ENCODE measurements at regions of chr6 and their contacts with region 1.

Region 1: DNA sequence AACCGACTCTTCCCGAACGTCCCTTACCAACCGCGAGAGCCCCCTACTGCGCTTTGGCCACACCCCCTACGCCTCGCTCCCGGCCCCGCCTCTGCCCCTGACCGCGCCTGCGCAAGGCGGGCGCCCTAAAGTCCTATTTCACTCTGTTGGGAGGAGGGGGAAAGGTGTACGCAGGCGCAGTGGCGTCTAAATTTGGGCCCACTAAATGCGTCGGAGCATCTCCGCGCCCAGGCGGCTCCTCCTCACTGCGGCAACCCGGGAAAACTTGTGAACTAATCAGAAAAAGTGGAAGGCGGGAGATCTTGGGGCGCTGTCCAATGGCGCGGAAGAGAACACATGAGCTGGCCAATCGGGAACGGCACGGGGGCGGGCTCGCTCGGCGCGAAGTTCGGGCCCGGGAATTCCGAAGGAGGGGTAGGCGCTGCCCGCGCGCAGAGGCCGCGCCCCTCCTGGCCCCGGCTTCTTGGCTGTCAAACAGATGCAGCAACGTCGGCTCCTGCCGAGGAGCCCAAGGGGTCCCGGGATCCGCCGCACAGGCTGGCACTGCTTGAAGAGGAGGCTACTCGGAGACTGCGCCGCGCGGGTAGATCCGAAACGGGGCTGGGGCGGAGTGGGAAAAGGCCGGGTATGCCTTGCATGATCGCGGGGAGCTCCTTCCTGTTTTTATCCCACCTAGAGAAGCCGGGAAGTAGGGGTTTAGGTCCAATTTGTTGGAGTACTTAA is at the start of gene TCF19:
- DNase-seq: peak; percentile 100

Region 2: GRCh38 chr6:31075528-31075927 is 82.8 kb before region 1 on chr6:
- CTCF ChIA-PET with region 1: no interaction called
- POLR2A ChIA-PET with region 1: no interaction called
- DNase-seq: no peak

Region 3: DNA sequence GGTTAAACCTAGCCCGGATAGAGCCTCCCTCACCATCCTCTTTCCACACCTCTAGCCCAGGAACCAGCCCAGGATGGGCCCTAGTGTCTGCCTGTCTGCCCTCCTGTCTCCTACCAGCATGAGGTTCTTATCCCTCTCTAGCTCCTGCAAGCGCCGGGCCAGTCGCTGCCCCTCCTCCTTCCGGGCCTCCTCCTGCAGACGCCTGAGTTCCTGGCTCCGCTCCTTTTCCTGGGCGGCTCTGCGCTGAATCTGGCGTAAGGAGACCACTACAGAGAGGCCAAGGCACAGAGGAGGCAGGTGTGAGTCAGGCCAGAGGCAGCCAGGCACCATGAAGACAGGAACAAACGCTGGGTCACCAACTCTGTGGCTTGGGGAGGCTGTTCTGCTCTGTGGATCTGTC is 15.2 kb before region 1 on chr6:
- CTCF ChIA-PET with region 1: interaction called, 4 read pairs
- POLR2A ChIA-PET with region 1: interaction called, 14 read pairs
- DNase-seq: no peak

Region 4: DNA sequence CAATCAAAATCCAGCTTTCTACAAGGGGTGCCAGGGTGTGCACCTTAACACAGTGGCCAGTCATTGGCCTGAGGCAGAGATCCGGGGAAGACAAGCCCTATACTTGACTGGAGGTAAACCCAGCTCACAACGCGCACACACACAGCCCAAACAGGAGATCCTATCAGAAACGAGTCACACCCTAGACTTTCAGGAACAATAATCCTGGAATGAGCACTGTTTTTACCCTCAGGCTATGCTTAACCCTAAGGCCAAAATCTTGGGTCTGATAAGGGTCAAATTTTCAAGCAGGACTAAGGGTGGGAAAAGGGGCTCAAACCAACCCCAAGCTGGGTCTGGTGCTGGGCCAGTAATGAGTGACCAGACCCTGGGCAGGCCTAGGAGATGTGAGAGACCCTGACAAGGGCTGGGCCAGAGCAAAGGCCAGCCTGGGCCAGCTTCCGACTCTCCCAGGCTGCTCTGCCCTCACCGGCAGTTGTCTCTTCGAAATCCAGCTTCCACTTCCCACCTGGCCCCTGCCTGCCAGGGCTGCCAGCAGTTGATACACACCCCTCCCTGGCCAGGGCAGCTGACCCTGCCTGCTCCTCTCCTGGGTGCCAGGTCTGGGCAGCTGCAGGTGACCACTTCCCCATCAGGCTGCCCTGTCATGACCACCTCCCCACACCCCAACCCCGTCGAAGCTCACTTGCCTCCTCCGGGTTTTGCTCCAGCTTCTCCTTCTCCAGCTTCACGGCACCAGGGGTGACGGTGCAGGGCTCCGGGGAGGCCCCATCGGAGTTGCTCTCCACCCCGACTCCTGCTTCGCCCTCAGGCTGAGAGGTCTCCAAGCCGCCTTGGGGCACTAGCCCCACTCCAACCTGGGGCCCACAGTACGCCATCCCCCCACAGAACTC is 11.5 kb after region 1 on chr6:
- CTCF ChIA-PET with region 1: no interaction called
- POLR2A ChIA-PET with region 1: interaction called, 13 read pairs
- DNase-seq: no peak

Measured in HEK293T (cell line).